ENCODE measurements at regions of chr2 and their contacts with region 1.

Region 1: DNA sequence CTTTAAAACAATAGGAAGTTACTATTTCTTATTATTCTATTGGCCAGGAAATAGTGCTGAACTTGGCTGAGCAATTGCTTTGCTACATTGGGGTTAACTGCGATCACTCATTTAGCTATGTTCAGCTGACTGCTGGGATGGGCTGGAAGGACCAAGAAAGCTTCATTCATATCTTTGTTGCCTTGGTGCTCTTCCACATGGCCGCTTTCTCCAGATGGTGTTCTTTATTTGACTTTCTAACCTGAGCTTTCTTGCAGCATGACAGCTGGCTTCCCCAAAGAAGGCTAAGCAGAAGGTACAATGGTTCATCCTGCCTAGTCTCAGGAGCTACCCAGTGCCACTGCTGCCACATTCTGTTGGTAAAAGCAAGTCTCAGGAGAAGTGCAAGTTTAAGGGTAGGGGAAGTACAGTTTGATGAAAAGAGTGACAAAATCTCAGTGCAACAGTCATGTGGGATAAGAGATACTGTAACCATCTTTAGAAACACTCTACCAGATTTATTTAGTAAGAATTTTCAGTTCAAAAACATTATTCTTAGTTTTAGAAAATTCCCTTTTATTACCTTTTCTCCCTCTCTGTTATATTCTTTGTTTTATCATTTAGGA is 180.6 kb upstream of the RBMS1 start:
- DNase-seq: peak; percentile 57
- H3K4me3 ChIP-seq: no peak overlapping the region
- H3K27ac ChIP-seq: no peak overlapping the region
- H3K4me1 ChIP-seq: no peaks in the 10 kb centered on the region
- H3K27me3 ChIP-seq: no peaks in the 10 kb centered on the region
- CTCF ChIP-seq: no peak
- EP300 ChIP-seq: no peak
- POLR2A ChIP-seq: no peak

Region 2: GRCh38 chr2:160516547-160517365 is 157.5 kb before region 1 on chr2:
- intact Hi-C with region 1: loop called (anchors 10 kb)
- DNase-seq: no peak
- H3K4me3 ChIP-seq: peak overlapping the region in 1 of 4 donors; percentile 5
- H3K27ac ChIP-seq: peak overlapping the region in 3 of 4 donors; percentile 35 to 55 (median 50)
- H3K4me1 ChIP-seq: peaks cover 0 to 19% (median 14%) of the 10 kb centered on the region in 4 donors
- H3K27me3 ChIP-seq: no peaks in the 10 kb centered on the region
- CTCF ChIP-seq: no peak
- EP300 ChIP-seq: no peak
- POLR2A ChIP-seq: no peak